ENCODE measurements at regions of chrX and their contacts with region 1.

Region 1: GRCh38 chrX:123878252-123878721 is 18.4 kb downstream of the XIAP start:
- DNase-seq: peak; percentile 33
- H3K4me3 ChIP-seq: peak overlapping the region; percentile 48
- H3K27ac ChIP-seq: peak overlapping the region; percentile 54
- H3K4me1 ChIP-seq: peaks cover 24% of the 10 kb centered on the region
- CTCF ChIP-seq: no peak

Region 2: DNA sequence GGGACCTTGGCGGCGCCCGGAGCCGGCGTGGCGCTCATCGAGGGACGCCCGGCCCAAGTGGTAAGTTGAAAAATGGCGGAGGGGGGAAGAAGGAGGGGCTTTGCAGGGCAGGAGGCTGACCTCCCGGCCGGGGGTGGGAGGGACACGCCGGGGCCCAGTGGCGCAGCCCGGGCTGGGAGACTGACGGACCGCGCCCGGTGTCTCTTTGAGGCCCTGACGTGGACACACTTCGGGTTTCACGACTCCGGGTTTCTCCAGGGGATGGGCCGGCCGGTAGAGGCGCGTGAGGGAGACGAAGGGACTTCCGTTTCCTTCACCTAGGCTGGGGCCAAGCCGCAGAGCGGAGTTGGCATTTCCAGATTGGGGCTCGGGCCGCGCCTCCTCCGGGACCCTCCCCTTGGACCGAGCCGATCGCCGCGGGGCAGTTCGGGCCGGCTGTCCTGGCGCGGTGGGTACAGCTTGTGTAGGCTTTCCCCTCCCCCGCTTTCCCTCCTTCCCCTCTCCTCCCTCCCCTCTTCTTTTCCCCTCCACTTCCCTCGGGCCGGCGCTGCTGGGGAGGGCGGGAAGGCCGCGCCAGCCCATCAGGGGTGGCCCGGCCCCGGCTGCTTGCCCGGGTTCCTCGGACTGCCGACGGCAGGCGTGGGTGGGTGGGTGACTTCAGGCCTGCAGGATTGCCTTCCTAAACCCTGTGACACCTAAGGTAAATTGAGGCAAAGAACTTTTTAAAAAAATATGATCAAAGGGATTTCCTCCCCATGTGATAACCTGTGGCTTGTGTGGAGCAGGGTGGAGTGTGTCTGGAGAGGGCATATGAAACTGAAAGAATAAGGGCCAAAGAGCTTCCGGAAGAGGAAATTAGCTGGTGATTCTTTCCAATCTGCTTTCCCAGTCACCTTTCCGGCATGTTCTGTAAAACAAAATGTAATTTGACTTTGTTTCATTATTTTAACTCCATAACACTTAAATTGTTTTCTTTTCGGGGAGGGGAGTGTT is 18.1 kb before region 1 on chrX and contains the start of gene XIAP:
- CTCF ChIA-PET with region 1: no interaction called
- POLR2A ChIA-PET with region 1: no interaction called
- intact Hi-C with region 1: loop called (anchors 1 kb)
- DNase-seq: peak; percentile 69
- H3K4me3 ChIP-seq: peak within 1 kb of the TSS; percentile 87
- H3K27ac ChIP-seq: peak within 1 kb of the TSS; percentile 83
- H3K4me1 ChIP-seq: peaks cover 12% of the 10 kb centered on the region
- CTCF ChIP-seq: no peak
- total RNA-seq, gene XIAP: 20.2 and 29.7 TPM in 2 replicates

Region 3: DNA sequence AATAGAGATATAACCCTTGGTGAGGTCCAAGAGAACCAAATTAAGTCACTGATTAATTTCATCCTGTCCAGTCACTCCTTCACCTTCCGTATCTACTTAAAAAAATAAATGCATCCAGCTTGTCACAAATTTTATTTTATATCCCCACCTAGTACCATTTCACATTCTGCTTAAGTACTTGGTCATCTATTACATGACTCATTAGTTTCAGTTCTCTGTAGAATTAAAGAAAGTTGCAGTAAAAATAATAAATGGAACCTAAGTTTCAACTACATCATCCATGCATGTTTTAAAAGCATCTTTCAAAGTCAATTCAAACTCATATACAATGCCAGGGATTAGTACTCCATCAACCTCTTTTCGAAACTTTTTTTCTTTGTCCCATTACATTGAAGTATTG is 598.3 kb after region 1 on chrX:
- CTCF ChIA-PET with region 1: no interaction called
- POLR2A ChIA-PET with region 1: no interaction called
- intact Hi-C with region 1: no loop called
- DNase-seq: no peak
- H3K4me3 ChIP-seq: no peak overlapping the region
- H3K27ac ChIP-seq: no peak overlapping the region
- H3K4me1 ChIP-seq: no peaks in the 10 kb centered on the region
- CTCF ChIP-seq: no peak